K562 (cell line): ENCODE measurements at regions of chr5 and their contacts with region 1.

Region 1: GRCh38 chr5:60699530-60700382 is at the start of gene DEPDC1B:
- DNase-seq: peak; percentile 88 to 94 (median 90)
- ATAC-seq: peak; percentile 95
- H3K4me3 ChIP-seq: peak within 1 kb of the TSS; percentile 69
- H3K27ac ChIP-seq: peak within 1 kb of the TSS; percentile 90
- H3K4me1 ChIP-seq: peaks cover 0 to 20% of the 10 kb centered on the region in 2 experiments; a peak in 2 of 5 replicates
- H3K27me3 ChIP-seq: no peaks in the 10 kb centered on the region
- CTCF ChIP-seq: peak; percentile 13 to 60 (median 53); a peak in 4 of 6 replicates
- EP300 ChIP-seq: no peak
- POLR2A ChIP-seq: peak; percentile 95
- RAD21 ChIP-seq: peak; percentile 18 to 48; a peak in 3 of 4 replicates
- polyA plus RNA-seq, gene DEPDC1B: 44.5 to 44.6 TPM

Region 2: GRCh38 chr5:60287174-60287771 is 412.5 kb before region 1 on chr5:
- CTCF ChIA-PET with region 1: no interaction called
- POLR2A ChIA-PET with region 1: no interaction called
- in situ Hi-C with region 1: no loop called
- intact Hi-C with region 1: no loop called
- DNase-seq: peak; percentile 28 to 66 (median 40)
- ATAC-seq: peak; percentile 83
- H3K4me3 ChIP-seq: no peak overlapping the region
- H3K27ac ChIP-seq: no peak overlapping the region
- H3K4me1 ChIP-seq: no peaks in the 10 kb centered on the region
- H3K27me3 ChIP-seq: no peaks in the 10 kb centered on the region
- CTCF ChIP-seq: peak; percentile 63 to 90 (median 66)
- EP300 ChIP-seq: no peak
- POLR2A ChIP-seq: no peak
- RAD21 ChIP-seq: peak in 1 of 2 experiments; percentile 43; a peak in 2 of 4 replicates

Region 3: GRCh38 chr5:60687927-60688720 is 11.6 kb before region 1 on chr5:
- CTCF ChIA-PET with region 1: no interaction called
- POLR2A ChIA-PET with region 1: interaction called, 10 read pairs
- in situ Hi-C with region 1: no loop called
- intact Hi-C with region 1: no loop called
- DNase-seq: peak in 3 of 4 experiments; percentile 19 to 67 (median 47)
- ATAC-seq: peak; percentile 99
- H3K4me3 ChIP-seq: no peak overlapping the region
- H3K27ac ChIP-seq: 0 out of 3 replicates have a peak overlapping the region, but pooled peaks have one; percentile 13
- H3K4me1 ChIP-seq: peaks cover 0 to 21% of the 10 kb centered on the region in 2 experiments; a peak in 3 of 5 replicates
- H3K27me3 ChIP-seq: no peaks in the 10 kb centered on the region
- CTCF ChIP-seq: peak; percentile 42 to 64 (median 55)
- EP300 ChIP-seq: no peak
- POLR2A ChIP-seq: no peak
- RAD21 ChIP-seq: no peak; a peak in 1 of 4 replicates

Region 4: GRCh38 chr5:60710373-60710772 is 10.6 kb after region 1 on chr5:
- CTCF ChIA-PET with region 1: no interaction called
- POLR2A ChIA-PET with region 1: interaction called, 20 read pairs
- in situ Hi-C with region 1: no loop called
- intact Hi-C with region 1: no loop called
- DNase-seq: no peak
- ATAC-seq: peak; percentile 55; the same call in 1 of the 3 replicates
- H3K4me3 ChIP-seq: no peak overlapping the region
- H3K27ac ChIP-seq: no peak overlapping the region
- H3K4me1 ChIP-seq: no peaks in the 10 kb centered on the region; a peak in 1 of 5 replicates
- H3K27me3 ChIP-seq: no peaks in the 10 kb centered on the region
- CTCF ChIP-seq: 0 out of 6 replicates have a peak, but pooled peaks of 1 of the 3 experiments have one; percentile 15
- EP300 ChIP-seq: no peak
- POLR2A ChIP-seq: no peak
- RAD21 ChIP-seq: peak in 1 of 2 experiments; percentile 42; a peak in 3 of 4 replicates

Region 5: DNA sequence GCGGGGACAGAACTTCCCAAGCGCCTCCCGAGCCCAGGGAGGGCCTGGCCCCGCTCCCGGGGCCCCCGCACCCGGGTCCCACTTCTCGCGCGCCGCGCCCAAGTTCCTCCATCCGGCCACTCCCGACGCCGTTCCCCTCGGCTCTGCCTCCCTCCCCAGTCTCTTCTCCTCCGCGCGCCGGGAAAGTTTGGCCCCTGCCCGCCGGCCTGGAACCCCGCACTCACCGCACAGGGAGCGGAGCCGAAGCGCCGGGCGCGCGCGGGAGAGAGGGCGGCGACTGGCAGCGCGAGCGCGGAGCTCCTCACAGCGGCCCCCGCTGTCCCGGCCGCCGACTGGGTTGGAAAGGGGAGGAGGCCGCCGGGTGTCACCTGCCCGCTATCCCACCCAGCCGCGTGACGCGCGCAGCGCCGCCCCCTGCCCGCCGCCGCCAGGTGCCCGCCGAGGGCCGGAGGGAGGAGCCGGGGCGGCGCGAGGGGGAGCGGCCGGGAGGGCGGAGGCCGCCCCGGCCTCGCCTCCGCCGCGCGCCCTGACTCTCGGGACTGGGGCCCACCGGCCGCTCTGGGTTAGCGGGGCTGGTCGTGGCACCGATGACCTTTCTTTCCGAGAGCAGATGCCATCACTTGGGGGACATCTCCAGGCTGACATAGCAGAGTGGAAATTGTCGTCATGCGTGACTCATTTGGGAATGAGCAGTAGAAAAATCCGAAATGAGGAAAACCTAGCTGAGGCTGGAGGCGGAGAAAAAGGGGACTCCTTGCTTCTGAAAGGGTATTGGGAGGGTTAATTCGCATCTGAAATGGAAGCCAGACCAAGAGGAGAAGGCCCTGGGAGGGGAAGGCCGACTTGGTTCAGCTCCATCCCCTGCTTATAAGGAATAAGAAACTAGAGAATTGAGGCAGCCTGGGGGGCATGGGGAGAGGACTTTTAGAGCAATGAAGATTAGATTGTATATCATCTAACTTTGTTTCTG is 144.5 kb after region 1 on chr5 and contains the start of gene ELOVL7:
- CTCF ChIA-PET with region 1: no interaction called
- POLR2A ChIA-PET with region 1: interaction called, 3 read pairs
- in situ Hi-C with region 1: no loop called
- intact Hi-C with region 1: loop called (anchors 5 kb)
- DNase-seq: peak; percentile 77 to 87 (median 82)
- ATAC-seq: peak; percentile 97
- H3K4me3 ChIP-seq: peak within 1 kb of the TSS; percentile 68
- H3K27ac ChIP-seq: peak within 1 kb of the TSS; percentile 44; the same call in 2 of the 3 replicates
- H3K4me1 ChIP-seq: peaks cover 5 to 14% of the 10 kb centered on the region in 2 experiments; a peak in 4 of 5 replicates
- H3K27me3 ChIP-seq: peaks cover 0 to 14% of the 10 kb centered on the region in 2 experiments; a peak in 3 of 5 replicates
- CTCF ChIP-seq: peak; percentile 28 to 69 (median 59); a peak in 4 of 6 replicates
- EP300 ChIP-seq: no peak
- POLR2A ChIP-seq: peak; percentile 48; the same call in 1 of the 2 replicates
- RAD21 ChIP-seq: peak; percentile 36 to 48; a peak in 3 of 4 replicates
- polyA plus RNA-seq, gene ELOVL7: 4.6 to 5.6 TPM

Region 6: GRCh38 chr5:60944904-60945812 is 245.4 kb after region 1 on chr5 and contains the starts of genes ERCC8 and NDUFAF2:
- CTCF ChIA-PET with region 1: no interaction called
- POLR2A ChIA-PET with region 1: interaction called, 6 read pairs
- in situ Hi-C with region 1: loop called (anchors 25 kb)
- intact Hi-C with region 1: no loop called
- DNase-seq: peak; percentile 94 to 98 (median 98)
- ATAC-seq: peak; percentile 99
- H3K4me3 ChIP-seq: peak within 1 kb of the TSS; percentile 91
- H3K27ac ChIP-seq: peak within 1 kb of the TSS; percentile 80
- H3K4me1 ChIP-seq: peaks cover 0 to 4% of the 10 kb centered on the region in 2 experiments; a peak in 2 of 5 replicates
- H3K27me3 ChIP-seq: no peaks in the 10 kb centered on the region
- CTCF ChIP-seq: no peak
- EP300 ChIP-seq: no peak
- POLR2A ChIP-seq: peak; percentile 87
- RAD21 ChIP-seq: no peak
- polyA plus RNA-seq, gene ERCC8: 37.1 to 39.4 TPM
- polyA plus RNA-seq, gene NDUFAF2: 140 to 155 TPM